ENCODE measurements at regions of chr1 and their contacts with region 1.

Region 1: GRCh38 chr1:234610348-234611152 is 572 bp upstream of the IRF2BP2 start:
- DNase-seq: peak; percentile 89 to 93 (median 91)
- ATAC-seq: peak; percentile 67
- H3K4me3 ChIP-seq: peak overlapping the region; percentile 89
- H3K4me3 Mint-ChIP-seq: peak overlapping the region; percentile 80 to 98 (median 90)
- H3K27ac ChIP-seq: peak overlapping the region; percentile 97
- H3K27ac Mint-ChIP-seq: peak overlapping the region; percentile 97 to 100 (median 99)
- H3K4me1 ChIP-seq: peaks cover 34 to 43% of the 10 kb centered on the region in 2 donors
- H3K4me1 Mint-ChIP-seq: peaks cover 45 to 62% (median 54%) of the 10 kb centered on the region in 7 donors
- H3K27me3 ChIP-seq: no peaks in the 10 kb centered on the region
- H3K27me3 Mint-ChIP-seq: peaks cover 0 to 6% (median 0%) of the 10 kb centered on the region in 5 donors

Region 2: DNA sequence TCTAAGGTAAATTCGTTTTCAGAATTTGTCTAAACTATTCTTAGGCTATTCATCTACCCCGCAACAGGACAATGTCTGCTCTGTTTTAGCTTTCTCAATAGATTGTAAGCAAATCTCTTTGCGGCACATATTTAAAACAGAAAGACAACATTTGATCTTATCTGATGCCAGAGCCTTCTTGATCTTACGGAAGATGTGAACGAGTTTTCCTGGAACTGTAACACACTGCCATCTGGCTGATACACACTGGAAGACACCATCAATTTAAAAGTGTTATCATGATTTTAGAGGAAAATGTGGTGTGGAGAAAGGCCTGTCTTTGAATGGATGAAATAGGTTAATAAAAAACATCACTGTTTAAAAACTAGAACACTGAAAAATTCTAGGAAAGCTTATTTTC is 201.2 kb before region 1 on chr1:
- CTCF ChIA-PET with region 1: no interaction called
- POLR2A ChIA-PET with region 1: interaction called, 3 read pairs
- intact Hi-C with region 1: loop called in 1 of 2 experiments (anchors 5 kb)
- DNase-seq: peak in 7 of 9 donors; percentile 44 to 80 (median 72)
- ATAC-seq: peak; percentile 81
- H3K4me3 ChIP-seq: peak overlapping the region; percentile 35
- H3K4me3 Mint-ChIP-seq: peak overlapping the region; percentile 64 to 89 (median 76)
- H3K27ac ChIP-seq: peak overlapping the region; percentile 83
- H3K27ac Mint-ChIP-seq: peak overlapping the region; percentile 91 to 99 (median 97)
- H3K4me1 ChIP-seq: peaks cover 0 to 48% of the 10 kb centered on the region in 2 donors
- H3K4me1 Mint-ChIP-seq: peaks cover 23 to 55% (median 49%) of the 10 kb centered on the region in 7 donors
- H3K27me3 ChIP-seq: no peaks in the 10 kb centered on the region
- H3K27me3 Mint-ChIP-seq: no peaks in the 10 kb centered on the region

Region 3: GRCh38 chr1:234553156-234553863 is 57.2 kb before region 1 on chr1:
- CTCF ChIA-PET with region 1: no interaction called
- POLR2A ChIA-PET with region 1: no interaction called
- intact Hi-C with region 1: no loop called
- DNase-seq: no peak
- ATAC-seq: no peak
- H3K4me3 ChIP-seq: no peak overlapping the region
- H3K4me3 Mint-ChIP-seq: no peak overlapping the region
- H3K27ac ChIP-seq: no peak overlapping the region
- H3K27ac Mint-ChIP-seq: no peak overlapping the region
- H3K4me1 ChIP-seq: no peaks in the 10 kb centered on the region
- H3K4me1 Mint-ChIP-seq: no peaks in the 10 kb centered on the region
- H3K27me3 ChIP-seq: no peaks in the 10 kb centered on the region
- H3K27me3 Mint-ChIP-seq: no peaks in the 10 kb centered on the region

Region 4: GRCh38 chr1:234656856-234657654 is 46.5 kb after region 1 on chr1:
- CTCF ChIA-PET with region 1: no interaction called
- POLR2A ChIA-PET with region 1: interaction called, 7 read pairs
- intact Hi-C with region 1: loop called in 1 of 2 experiments (anchors 5 kb)
- DNase-seq: no peak
- ATAC-seq: peak; percentile 95
- H3K4me3 ChIP-seq: no peak overlapping the region
- H3K4me3 Mint-ChIP-seq: peak overlapping the region in 1 of 10 donors; percentile 43
- H3K27ac ChIP-seq: no peak overlapping the region
- H3K27ac Mint-ChIP-seq: peak overlapping the region in 3 of 9 donors; percentile 20 to 54 (median 42)
- H3K4me1 ChIP-seq: no peaks in the 10 kb centered on the region
- H3K4me1 Mint-ChIP-seq: peaks cover 0 to 15% (median 12%) of the 10 kb centered on the region in 7 donors
- H3K27me3 ChIP-seq: no peaks in the 10 kb centered on the region
- H3K27me3 Mint-ChIP-seq: peaks cover 0 to 6% (median 0%) of the 10 kb centered on the region in 5 donors

Region 5: DNA sequence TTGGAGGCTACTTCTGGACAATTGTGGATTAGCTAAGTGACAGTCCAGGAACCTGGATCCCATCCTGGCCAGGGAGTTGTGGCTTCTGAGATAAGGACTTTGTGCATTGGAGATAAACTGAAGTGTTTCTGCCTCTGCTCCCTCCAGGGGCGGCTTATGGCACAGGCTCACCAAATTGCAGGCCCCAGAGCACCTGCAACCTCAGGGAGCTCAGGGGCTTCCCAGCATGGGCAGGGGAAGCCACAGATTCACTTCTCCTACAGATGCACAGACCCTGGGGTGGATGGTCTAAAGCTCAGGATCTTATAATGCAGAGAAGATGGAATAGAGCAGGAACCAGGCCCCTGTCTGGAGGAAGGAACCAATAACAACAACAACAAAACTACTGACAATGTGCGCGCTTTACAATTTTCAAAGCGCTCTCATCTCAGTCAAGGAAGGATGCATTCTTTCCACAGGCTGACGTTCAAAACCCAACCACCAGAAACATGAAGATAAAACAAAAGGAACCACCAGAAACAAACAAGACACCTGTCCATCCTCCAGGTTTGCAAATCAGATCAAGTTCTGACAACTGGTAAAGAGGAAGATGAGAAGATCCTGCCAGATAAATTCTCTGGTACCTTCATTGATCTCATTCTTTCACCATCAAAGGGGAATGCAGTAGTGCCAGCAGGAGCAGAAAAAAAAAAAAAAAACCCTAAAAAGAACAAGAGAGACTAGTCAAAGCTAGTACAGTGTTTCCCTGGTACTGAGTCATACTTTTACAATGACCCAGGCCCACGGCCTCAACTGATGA is 120.4 kb after region 1 on chr1:
- CTCF ChIA-PET with region 1: interaction called, 3 read pairs
- POLR2A ChIA-PET with region 1: interaction called, 188 read pairs
- intact Hi-C with region 1: loop called in 1 of 2 experiments (anchors 1 kb)
- DNase-seq: peak in 8 of 9 donors; percentile 47 to 82 (median 68)
- ATAC-seq: peak; percentile 76
- H3K4me3 ChIP-seq: no peak overlapping the region
- H3K4me3 Mint-ChIP-seq: peak overlapping the region; percentile 45 to 77 (median 64)
- H3K27ac ChIP-seq: peak overlapping the region; percentile 43
- H3K27ac Mint-ChIP-seq: peak overlapping the region; percentile 57 to 96 (median 87)
- H3K4me1 ChIP-seq: peaks cover 35 to 42% of the 10 kb centered on the region in 2 donors
- H3K4me1 Mint-ChIP-seq: peaks cover 38 to 82% (median 62%) of the 10 kb centered on the region in 7 donors
- H3K27me3 ChIP-seq: no peaks in the 10 kb centered on the region
- H3K27me3 Mint-ChIP-seq: no peaks in the 10 kb centered on the region

Region 6: DNA sequence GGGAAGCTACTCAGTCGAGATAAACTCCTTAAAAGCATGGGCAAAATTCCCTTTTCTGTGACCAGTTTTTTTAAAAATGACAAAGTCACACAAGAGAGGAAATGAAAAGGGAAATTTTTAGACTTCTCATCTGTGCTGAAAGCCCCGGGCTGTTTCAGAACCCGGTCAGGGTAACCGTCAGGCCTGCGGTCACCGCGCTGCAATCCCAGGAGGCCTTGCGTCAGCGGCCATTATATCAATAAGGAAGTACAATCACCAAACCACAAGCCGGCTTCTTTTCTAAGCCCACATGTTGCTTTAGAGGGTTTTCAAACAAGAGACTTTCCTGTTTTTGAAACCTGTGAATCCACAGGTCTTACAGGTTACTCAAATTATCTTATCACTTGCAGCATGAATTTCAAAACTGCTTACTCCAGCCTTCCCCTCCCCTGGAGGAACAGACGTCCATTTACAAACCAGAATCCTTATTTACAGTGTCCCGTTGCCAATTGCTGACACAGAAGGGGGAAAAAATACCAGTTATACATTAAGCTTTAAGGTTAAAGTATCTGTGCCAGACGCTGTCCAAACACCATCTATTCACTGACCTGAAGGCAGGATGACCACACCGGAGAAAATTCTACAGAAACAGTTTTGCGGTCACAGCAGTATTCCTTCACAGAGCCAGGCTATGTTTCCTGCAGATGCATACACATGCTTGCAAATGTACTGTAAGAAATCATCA is 352.8 kb after region 1 on chr1:
- CTCF ChIA-PET with region 1: no interaction called
- POLR2A ChIA-PET with region 1: interaction called, 9 read pairs
- intact Hi-C with region 1: loop called (anchors 1 kb)
- DNase-seq: peak; percentile 55 to 90 (median 75)
- ATAC-seq: peak; percentile 93
- H3K4me3 ChIP-seq: peak overlapping the region; percentile 41
- H3K4me3 Mint-ChIP-seq: peak overlapping the region; percentile 68 to 87 (median 80)
- H3K27ac ChIP-seq: peak overlapping the region; percentile 79
- H3K27ac Mint-ChIP-seq: peak overlapping the region; percentile 88 to 97 (median 93)
- H3K4me1 ChIP-seq: peaks cover 36 to 55% of the 10 kb centered on the region in 2 donors
- H3K4me1 Mint-ChIP-seq: peaks cover 55 to 75% (median 69%) of the 10 kb centered on the region in 7 donors
- H3K27me3 ChIP-seq: no peaks in the 10 kb centered on the region
- H3K27me3 Mint-ChIP-seq: no peaks in the 10 kb centered on the region

Region 7: DNA sequence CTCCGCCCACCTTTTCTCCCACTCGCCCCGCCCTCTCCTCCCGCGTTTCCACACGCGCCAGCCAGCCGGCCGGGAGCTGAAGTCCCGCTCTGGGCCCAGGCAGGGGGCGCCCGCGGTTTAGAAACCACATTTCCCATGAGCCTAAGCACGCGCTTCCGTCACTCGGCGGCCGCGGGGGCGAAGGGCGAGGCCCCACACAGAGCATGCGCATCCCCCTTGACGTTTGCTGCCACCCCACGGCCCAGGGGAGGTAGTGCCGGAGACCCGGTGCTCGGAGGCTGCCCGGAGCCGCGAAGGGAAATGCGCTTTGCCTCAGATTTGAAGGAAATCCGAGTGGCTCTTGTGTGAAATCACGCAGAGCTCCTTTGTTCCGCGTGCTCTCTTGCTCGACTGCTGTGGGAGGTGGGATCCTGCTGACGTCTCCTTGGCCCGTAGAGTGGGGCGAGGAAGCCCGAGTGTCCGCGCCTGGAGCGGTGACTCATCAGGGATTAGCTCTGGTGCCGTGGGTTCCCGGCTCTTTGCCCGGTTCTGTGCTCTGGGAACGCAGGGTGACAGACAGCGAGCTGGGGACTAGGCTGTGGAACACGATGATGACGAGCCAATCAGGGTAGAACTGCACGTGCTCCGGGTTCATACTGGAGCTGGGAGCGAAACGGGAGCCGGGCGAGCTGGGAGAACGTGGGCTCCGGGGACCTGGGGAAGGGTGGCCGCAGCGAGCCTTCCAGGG is 894.1 kb after region 1 on chr1:
- CTCF ChIA-PET with region 1: no interaction called
- POLR2A ChIA-PET with region 1: no interaction called
- intact Hi-C with region 1: loop called in 1 of 2 experiments (anchors 5 kb)
- DNase-seq: peak; percentile 95 to 99 (median 98)
- ATAC-seq: peak; percentile 93
- H3K4me3 ChIP-seq: peak overlapping the region; percentile 93
- H3K4me3 Mint-ChIP-seq: peak overlapping the region; percentile 83 to 98 (median 96)
- H3K27ac ChIP-seq: peak overlapping the region; percentile 90
- H3K27ac Mint-ChIP-seq: peak overlapping the region; percentile 94 to 98 (median 97)
- H3K4me1 ChIP-seq: peaks cover 0 to 9% of the 10 kb centered on the region in 2 donors
- H3K4me1 Mint-ChIP-seq: peaks cover 4 to 28% (median 20%) of the 10 kb centered on the region in 7 donors
- H3K27me3 ChIP-seq: no peaks in the 10 kb centered on the region
- H3K27me3 Mint-ChIP-seq: peaks cover 0 to 9% (median 0%) of the 10 kb centered on the region in 5 donors

Measured in naive thymus-derived CD4-positive, alpha-beta T cell (primary cell).